ENCODE measurements at regions of chr17 and their contacts with region 1.

Region 1: GRCh38 chr17:35808962-35809854 is at the start of gene TAF15:
- DNase-seq: peak; percentile 99
- H3K4me3 Mint-ChIP-seq: peak within 1 kb of the TSS; percentile 99
- H3K27ac Mint-ChIP-seq: peak within 1 kb of the TSS; percentile 97
- H3K4me1 Mint-ChIP-seq: peaks cover 48% of the 10 kb centered on the region
- H3K27me3 Mint-ChIP-seq: no peaks in the 10 kb centered on the region
- total RNA-seq, gene TAF15: 326 and 338 TPM in 2 replicates

Region 2: DNA sequence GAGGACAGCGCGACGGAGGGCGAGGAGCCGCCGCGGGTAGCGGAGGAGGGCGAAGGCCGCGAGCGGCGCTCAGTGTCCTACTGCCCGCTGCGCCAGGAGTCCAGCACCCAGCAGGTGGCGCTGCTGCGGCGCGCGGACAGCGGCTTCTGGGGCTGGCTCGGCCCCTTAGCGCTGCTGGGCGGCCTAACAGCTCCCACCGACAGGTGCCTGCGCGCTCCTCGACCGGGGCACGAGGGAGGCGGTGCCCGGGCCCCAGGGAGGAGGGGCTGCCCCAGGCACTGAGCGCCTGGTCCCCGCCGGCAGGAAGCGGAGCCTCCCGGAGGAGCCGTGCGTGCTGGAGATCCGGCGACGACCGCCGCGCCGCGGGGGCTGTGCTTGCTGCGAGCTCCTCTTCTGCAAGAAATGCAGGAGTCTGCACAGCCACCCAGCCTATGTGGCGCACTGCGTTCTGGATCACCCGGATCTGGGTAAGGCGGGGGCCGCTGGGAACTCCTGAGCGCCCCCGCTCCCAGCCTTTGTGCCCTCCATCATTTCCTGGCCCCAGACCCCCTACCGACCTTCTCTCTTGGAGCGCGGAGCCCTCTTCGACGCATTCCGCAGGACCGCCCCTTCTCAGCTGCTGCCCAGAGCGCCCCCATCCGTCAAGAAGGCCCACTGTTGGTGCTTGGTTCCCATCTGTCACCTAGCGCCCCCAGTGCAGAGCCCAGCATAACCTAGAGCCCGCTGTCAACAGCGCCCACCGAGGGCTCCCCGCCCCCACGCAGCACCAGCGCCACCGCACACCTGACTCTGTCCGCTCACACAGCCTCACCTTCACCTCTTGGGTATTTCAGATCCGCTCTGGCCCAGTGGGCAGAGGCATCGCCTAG is 44.9 kb before region 1 on chr17:
- intact Hi-C with region 1: loop called (anchors 1 kb)
- DNase-seq: peak; percentile 96
- H3K4me3 Mint-ChIP-seq: peak overlapping the region; percentile 86
- H3K27ac Mint-ChIP-seq: peak overlapping the region; percentile 64
- H3K4me1 Mint-ChIP-seq: peaks cover 8% of the 10 kb centered on the region
- H3K27me3 Mint-ChIP-seq: peaks cover 9% of the 10 kb centered on the region

Region 3: DNA sequence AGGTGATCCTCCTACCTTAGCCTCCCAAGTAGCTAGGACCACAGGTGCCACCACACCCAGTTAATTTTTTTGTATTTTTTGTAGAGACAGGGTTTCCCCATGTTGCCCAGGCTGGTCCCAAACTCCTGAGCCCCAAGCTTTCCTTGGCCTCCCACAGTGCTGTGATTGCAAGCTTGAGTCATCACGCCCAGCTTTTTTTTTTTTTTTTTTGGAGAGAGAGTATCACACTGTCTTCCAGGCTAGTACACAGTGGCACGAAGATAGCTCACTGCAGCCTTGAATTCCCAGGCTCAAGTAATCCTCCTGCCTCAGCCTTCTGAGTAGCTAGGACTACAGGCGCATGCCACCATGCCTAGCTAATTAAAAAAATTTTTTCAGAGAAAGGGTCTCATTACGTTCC is 32.3 kb after region 1 on chr17:
- intact Hi-C with region 1: no loop called
- DNase-seq: no peak
- H3K4me3 Mint-ChIP-seq: no peak overlapping the region
- H3K27ac Mint-ChIP-seq: no peak overlapping the region
- H3K4me1 Mint-ChIP-seq: peaks cover 11% of the 10 kb centered on the region
- H3K27me3 Mint-ChIP-seq: no peaks in the 10 kb centered on the region